B cell (primary cell): ENCODE measurements at regions of chr7 and their contacts with region 1.

Region 1: GRCh38 chr7:105003275-105003674 is 10.7 kb upstream of the KMT2E start:
- DNase-seq: no peak
- ATAC-seq: no peak
- H3K4me3 ChIP-seq: no peak overlapping the region
- H3K4me3 Mint-ChIP-seq: peak overlapping the region; percentile 47
- H3K27ac ChIP-seq: peak overlapping the region in 1 of 2 donors; percentile 77
- H3K27ac Mint-ChIP-seq: peak overlapping the region; percentile 76
- H3K4me1 ChIP-seq: peaks cover 44 to 66% of the 10 kb centered on the region in 2 donors
- H3K4me1 Mint-ChIP-seq: peaks cover 77% of the 10 kb centered on the region
- H3K27me3 ChIP-seq: no peaks in the 10 kb centered on the region
- H3K27me3 Mint-ChIP-seq: no peaks in the 10 kb centered on the region
- CTCF ChIP-seq: no peak

Region 2: DNA sequence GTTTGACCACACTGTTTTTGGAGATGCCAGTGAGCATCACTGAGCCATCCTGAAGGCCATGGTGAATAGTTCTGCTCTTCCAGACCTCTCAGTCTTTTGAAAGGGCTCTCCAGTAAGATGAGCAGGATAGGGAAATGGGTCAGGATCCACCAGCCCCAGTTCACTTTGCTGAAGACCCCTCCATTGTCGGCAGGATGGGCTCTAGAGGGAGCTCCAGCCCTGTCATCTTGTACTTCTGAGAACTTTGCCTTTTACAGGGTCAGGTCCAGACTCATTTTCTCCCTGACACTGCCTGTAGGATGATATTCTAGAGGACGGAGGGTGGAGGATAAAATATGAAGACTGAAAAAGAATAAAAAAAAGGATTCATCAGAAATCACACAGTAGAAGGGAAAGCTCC is 661.7 kb before region 1 on chr7:
- CTCF ChIA-PET with region 1: no interaction called
- POLR2A ChIA-PET with region 1: no interaction called
- intact Hi-C with region 1: no loop called
- DNase-seq: no peak
- ATAC-seq: no peak
- H3K4me3 ChIP-seq: no peak overlapping the region
- H3K4me3 Mint-ChIP-seq: no peak overlapping the region
- H3K27ac ChIP-seq: no peak overlapping the region
- H3K27ac Mint-ChIP-seq: no peak overlapping the region
- H3K4me1 ChIP-seq: no peaks in the 10 kb centered on the region
- H3K4me1 Mint-ChIP-seq: no peaks in the 10 kb centered on the region
- H3K27me3 ChIP-seq: no peaks in the 10 kb centered on the region
- H3K27me3 Mint-ChIP-seq: peaks cover 5% of the 10 kb centered on the region
- CTCF ChIP-seq: no peak

Region 3: DNA sequence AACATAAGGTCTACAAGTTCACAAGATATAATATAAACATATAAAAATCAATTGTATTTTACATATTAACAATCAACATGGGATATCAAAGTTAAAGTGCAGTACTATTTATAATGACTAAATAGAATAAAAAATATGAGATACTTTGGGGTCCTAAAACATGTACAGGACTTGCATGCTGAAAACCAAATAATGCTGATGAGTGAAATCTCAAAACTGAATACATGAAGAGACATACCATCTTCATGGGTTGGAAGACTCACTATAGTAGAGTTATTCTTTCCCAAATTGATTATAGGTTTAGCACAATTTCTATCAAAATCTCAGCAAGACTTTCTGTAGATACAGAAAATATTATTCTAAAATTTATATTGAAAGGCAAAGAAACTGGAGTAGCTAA is 493.4 kb before region 1 on chr7:
- CTCF ChIA-PET with region 1: no interaction called
- POLR2A ChIA-PET with region 1: no interaction called
- intact Hi-C with region 1: no loop called
- DNase-seq: no peak
- ATAC-seq: no peak
- H3K4me3 ChIP-seq: no peak overlapping the region
- H3K4me3 Mint-ChIP-seq: no peak overlapping the region
- H3K27ac ChIP-seq: no peak overlapping the region
- H3K27ac Mint-ChIP-seq: no peak overlapping the region
- H3K4me1 ChIP-seq: no peaks in the 10 kb centered on the region
- H3K4me1 Mint-ChIP-seq: no peaks in the 10 kb centered on the region
- H3K27me3 ChIP-seq: no peaks in the 10 kb centered on the region
- H3K27me3 Mint-ChIP-seq: no peaks in the 10 kb centered on the region
- CTCF ChIP-seq: no peak

Region 4: GRCh38 chr7:105036217-105037168 is 33.2 kb after region 1 on chr7:
- CTCF ChIA-PET with region 1: interaction called, 3 read pairs
- POLR2A ChIA-PET with region 1: no interaction called
- intact Hi-C with region 1: loop called (anchors 5 kb)
- DNase-seq: no peak
- ATAC-seq: no peak
- H3K4me3 ChIP-seq: no peak overlapping the region
- H3K4me3 Mint-ChIP-seq: no peak overlapping the region
- H3K27ac ChIP-seq: peak overlapping the region in 1 of 2 donors; percentile 58
- H3K27ac Mint-ChIP-seq: peak overlapping the region; percentile 22
- H3K4me1 ChIP-seq: peaks cover 27 to 36% of the 10 kb centered on the region in 2 donors
- H3K4me1 Mint-ChIP-seq: peaks cover 47% of the 10 kb centered on the region
- H3K27me3 ChIP-seq: no peaks in the 10 kb centered on the region
- H3K27me3 Mint-ChIP-seq: no peaks in the 10 kb centered on the region
- CTCF ChIP-seq: no peak